Mucosa of descending colon (tissue), 3 donors: ENCODE measurements at regions of chr2 and their contacts with region 1.

Region 1: GRCh38 chr2:72892506-72893173 is 5.4 kb downstream of the SPR start:
- DNase-seq: peak; percentile 75 to 79 (median 76)
- ATAC-seq: peak; percentile 65
- H3K4me3 ChIP-seq: no peak overlapping the region
- H3K4me1 ChIP-seq: peaks cover 37% of the 10 kb centered on the region
- CTCF ChIP-seq: peak; percentile 61

Region 2: DNA sequence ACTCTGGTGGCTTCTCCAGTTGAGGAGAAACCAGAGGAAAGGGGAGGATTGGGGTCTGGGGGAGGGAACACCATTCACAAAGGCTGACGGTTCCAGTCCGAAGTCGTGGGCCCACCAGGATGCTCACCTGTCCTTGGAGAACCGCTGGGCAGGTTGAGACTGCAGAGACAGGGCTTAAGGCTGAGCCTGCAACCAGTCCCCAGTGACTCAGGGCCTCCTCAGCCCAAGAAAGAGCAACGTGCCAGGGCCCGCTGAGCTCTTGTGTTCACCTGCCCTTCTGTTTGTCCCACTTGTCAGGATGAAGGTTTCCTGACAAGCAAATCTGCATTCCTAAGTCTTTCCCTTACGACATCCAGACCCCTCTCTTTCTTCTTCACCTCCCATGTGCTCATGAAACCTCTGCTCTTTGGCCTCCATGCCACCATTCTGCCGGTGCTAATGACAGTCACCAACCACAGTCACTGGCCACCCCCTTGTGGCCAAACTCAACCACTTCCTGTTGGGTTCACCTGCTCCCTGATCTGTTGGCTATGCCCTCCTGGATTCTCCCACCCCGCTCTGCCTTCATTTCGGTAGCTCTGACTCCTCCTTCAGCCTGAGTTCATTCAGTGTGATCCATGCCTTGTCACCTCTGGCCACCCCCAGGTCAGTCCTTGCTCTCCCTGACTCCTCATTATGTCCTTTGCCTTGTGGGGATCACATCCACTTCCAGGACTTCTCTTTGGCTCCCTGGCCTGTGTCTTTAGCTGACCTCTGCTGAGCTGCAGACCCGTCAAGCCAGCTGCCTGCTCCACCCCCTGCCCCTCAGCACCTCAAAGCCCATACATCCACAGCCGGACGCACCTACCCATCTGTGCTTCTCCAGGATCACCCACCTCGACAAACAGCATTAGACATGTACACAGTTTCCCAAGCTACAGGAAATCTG is 42.3 kb after region 1 on chr2:
- intact Hi-C with region 1: loop called in 1 of 2 experiments (anchors 5 kb)
- DNase-seq: peak; percentile 42 to 68 (median 66)
- ATAC-seq: peak; percentile 71
- H3K4me3 ChIP-seq: no peak overlapping the region
- H3K4me1 ChIP-seq: no peaks in the 10 kb centered on the region
- CTCF ChIP-seq: peak; percentile 19

Region 3: DNA sequence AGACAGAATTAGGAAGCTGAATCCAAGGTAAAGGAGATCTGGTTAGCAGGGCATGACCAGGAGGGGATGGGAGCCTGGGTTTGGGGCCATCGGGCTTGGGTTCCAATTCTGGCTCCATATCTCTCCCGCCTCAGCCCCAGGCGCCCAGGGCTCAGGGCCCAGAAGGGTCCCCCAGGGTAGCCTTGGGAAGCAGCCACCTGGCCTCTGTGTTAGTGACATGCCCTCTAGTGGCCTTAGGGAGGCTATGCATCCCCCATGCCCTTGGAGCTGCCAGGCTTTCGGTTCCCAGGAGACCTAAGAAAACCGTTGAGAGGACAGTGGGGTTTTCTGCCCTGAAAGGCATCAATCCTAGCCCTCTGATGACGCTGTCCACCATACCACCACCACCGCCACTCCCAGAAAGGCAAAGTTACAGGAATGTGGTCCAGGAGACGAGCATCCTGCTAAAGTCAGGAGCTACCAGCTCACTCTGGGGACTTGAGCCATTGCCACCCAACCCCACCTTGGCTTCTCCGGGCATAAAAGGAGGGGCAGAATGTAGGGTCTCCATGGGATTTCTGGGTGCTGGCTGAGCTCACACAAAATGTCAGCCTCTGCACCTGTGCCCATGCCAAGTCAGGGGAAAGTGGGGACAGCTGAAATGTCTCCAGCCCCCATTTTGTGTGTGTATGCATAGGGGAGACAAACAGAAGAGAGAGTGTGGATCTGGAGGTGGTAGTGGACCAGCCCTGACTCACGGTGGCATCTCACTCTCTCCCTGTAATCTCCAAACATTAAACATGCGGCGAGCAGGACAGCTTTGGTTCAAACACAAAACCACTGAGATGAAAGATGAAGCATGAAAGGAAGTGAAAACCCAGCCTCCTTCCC is 81.2 kb after region 1 on chr2:
- intact Hi-C with region 1: loop called in 1 of 2 experiments (anchors 5 kb)
- DNase-seq: peak; percentile 45 to 63 (median 47)
- ATAC-seq: peak; percentile 89
- H3K4me3 ChIP-seq: no peak overlapping the region
- H3K4me1 ChIP-seq: no peaks in the 10 kb centered on the region
- CTCF ChIP-seq: peak; percentile 57

Region 4: DNA sequence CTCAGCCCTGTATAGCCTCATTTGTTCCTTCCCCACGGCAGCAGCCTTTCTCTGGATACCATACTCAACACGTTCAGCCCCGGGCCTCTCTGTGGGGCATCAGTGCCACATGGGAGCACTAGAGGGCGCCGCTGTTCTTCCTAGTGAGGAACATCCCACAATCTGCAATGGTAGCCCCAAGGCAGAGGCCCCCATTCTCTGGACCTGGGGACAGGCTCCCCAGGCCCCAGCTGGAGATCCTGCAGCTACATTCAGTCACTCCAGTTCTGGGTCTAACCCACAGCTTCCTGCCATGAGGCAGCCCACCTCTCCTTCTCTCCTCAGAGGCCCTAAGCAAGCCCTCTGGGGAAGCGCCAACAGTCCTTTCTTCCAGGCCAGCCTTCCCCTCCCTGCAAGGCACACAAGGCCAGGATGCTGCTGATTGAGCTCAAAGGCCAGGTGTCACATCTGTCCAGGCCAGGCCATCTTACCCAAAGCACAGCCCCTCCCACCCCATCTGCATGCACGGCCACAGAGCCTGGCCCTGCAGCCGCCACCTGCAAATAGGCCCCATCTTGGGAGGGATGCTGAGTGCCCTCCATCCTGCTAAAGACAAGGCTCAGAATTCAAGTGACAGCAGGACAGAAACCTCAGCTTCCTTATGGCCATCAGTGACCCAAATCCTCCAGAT is 193.2 kb after region 1 on chr2:
- intact Hi-C with region 1: loop called in 1 of 2 experiments (anchors 10 kb)
- DNase-seq: peak; percentile 81 to 95 (median 88)
- ATAC-seq: peak; percentile 83
- H3K4me3 ChIP-seq: no peak overlapping the region
- H3K4me1 ChIP-seq: no peaks in the 10 kb centered on the region
- CTCF ChIP-seq: peak; percentile 91

Region 5: DNA sequence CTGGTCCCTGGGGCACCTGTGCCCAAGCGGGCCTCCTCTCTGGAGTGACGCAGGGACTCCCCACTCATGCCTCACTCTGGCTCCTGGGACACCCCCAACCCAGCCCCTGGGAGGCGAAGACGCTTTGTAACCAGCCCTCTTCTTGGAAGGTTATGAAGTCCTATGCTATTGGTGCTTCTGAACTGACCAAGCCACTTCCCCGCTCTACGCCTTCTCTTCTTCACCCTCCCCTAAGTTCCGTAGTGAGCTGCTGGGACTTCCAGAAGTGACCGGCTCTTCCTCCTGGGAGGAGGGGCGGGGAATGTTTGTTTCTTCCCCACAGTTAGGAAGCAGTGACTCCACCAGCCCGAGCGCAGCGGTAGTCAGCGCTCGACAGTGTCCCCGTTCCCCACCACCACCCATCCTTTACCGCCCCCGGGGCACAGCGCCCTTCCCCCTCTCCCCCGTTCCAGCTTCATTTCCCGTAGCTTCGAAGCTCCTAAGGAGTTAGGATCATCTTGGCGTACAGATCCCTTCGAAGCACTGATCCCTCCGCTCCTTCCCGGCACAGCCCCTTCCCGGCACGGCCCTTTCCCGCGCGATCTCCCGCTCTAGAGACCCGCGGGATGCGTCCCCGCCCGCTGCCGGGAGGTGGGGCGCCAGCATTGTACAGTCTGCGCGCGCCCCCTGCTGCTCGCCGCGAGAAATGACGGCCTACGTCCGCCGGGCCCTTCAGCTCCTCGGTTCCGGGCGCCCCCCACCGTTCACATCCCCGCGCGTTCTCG is 284.4 kb after region 1 on chr2:
- intact Hi-C with region 1: loop called in 1 of 2 experiments (anchors 10 kb)
- DNase-seq: peak; percentile 89 to 94 (median 91)
- ATAC-seq: peak; percentile 97
- H3K4me3 ChIP-seq: no peak overlapping the region
- H3K4me1 ChIP-seq: peaks cover 16% of the 10 kb centered on the region
- CTCF ChIP-seq: peak; percentile 99